Spleen (tissue), 13 donors: ENCODE measurements at regions of chr11 and their contacts with region 1.

Region 1: GRCh38 chr11:61332797-61333549 is at the starts of genes DDB1 and TKFC:
- DNase-seq: peak; percentile 100
- H3K4me3 ChIP-seq: peak within 1 kb of the TSS; percentile 82 to 99 (median 90)
- H3K27ac ChIP-seq: peak within 1 kb of the TSS; percentile 82 to 96 (median 92)
- H3K4me1 ChIP-seq: peaks cover 36 to 89% (median 57%) of the 10 kb centered on the region in 6 donors
- H3K27me3 ChIP-seq: no peaks in the 10 kb centered on the region
- CTCF ChIP-seq: peak in 3 of 11 experiments; percentile 6 to 23 (median 23)
- POLR2A ChIP-seq: peak; percentile 8 to 62 (median 58)
- total RNA-seq, gene DDB1: 118 to 157 (median 151) TPM
- total RNA-seq, gene TKFC: 33.1 to 61.5 (median 36.4) TPM

Region 2: GRCh38 chr11:61384271-61385242 is 51.6 kb after region 1 on chr11:
- intact Hi-C with region 1: loop called (anchors 2 kb)
- DNase-seq: no peak
- H3K4me3 ChIP-seq: no peak overlapping the region
- H3K27ac ChIP-seq: no peak overlapping the region
- H3K4me1 ChIP-seq: peaks cover 5 to 16% (median 11%) of the 10 kb centered on the region in 6 donors
- H3K27me3 ChIP-seq: no peaks in the 10 kb centered on the region
- CTCF ChIP-seq: no peak
- POLR2A ChIP-seq: no peak

Region 3: DNA sequence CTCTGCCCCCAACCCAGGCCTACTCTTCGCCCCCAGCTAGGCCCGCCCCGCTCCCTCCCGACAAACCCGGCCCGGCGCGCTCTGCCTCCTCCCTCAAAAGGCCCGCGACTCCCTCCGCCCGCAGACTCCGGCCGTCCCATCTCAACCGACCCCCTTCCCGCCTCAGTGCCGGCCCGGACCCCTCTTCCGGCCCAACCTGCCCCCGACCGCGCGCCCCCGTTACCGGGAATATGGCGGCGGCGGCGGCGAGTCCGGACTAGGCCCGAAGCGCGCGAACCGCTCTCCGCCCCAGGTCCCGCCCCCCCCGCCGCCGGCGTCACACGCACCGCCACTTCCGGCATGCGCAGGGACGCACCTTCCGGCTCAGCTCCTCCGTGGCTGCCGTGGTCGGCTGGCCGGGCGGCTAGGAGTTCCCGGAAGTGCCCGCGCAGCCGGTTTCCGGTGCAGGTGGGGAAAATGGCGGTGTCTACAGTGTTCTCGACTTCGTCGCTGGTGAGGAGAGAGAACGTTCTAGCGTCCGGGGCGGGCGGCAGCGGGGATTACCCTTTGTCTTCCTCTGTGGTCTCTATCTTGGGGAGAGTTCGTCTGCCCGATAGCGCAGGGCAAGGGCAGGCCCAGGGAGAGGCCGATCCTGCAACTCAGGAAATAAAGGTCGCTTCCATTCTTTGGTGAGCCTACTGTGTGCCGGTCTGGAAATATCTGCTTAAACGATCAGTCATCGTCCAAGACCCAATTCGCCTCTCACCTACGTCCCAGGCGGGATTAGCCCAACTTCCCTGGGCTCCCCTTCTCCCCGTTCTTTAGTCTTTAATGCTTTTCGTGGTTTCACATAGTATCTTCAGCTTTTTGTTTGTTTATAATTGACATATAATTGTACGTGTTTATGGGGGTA is 97.0 kb after region 1 on chr11 and contains the starts of genes CPSF7 and SDHAF2:
- intact Hi-C with region 1: loop called (anchors 10 kb)
- DNase-seq: peak; percentile 100
- H3K4me3 ChIP-seq: peak within 1 kb of the TSS; percentile 64 to 91 (median 74)
- H3K27ac ChIP-seq: peak within 1 kb of the TSS; percentile 93 to 100 (median 96)
- H3K4me1 ChIP-seq: peaks cover 35 to 92% (median 74%) of the 10 kb centered on the region in 6 donors
- H3K27me3 ChIP-seq: no peaks in the 10 kb centered on the region
- CTCF ChIP-seq: peak in 1 of 11 experiments; percentile 9
- POLR2A ChIP-seq: peak in 1 of 3 donors; percentile 12
- total RNA-seq, gene CPSF7: 60.3 to 94.3 (median 85.5) TPM
- total RNA-seq, gene SDHAF2: 39.8 to 74.2 (median 50.0) TPM